ENCODE measurements at regions of chr17 and their contacts with region 1.

Region 1: GRCh38 chr17:2347547-2348307 is 10.4 kb downstream of the SGSM2 start:
- DNase-seq: no peak
- ATAC-seq: no peak
- H3K4me3 ChIP-seq: no peak overlapping the region
- H3K4me3 Mint-ChIP-seq: no peak overlapping the region
- H3K27ac ChIP-seq: no peak overlapping the region
- H3K27ac Mint-ChIP-seq: no peak overlapping the region
- H3K4me1 ChIP-seq: no peaks in the 10 kb centered on the region
- H3K4me1 Mint-ChIP-seq: no peaks in the 10 kb centered on the region
- H3K27me3 ChIP-seq: no peaks in the 10 kb centered on the region
- H3K27me3 Mint-ChIP-seq: no peaks in the 10 kb centered on the region
- CTCF ChIP-seq: no peak

Region 2: GRCh38 chr17:1882836-1883235 is 464.9 kb before region 1 on chr17:
- CTCF ChIA-PET with region 1: no interaction called
- POLR2A ChIA-PET with region 1: no interaction called
- intact Hi-C with region 1: loop called (anchors 5 kb)
- DNase-seq: peak; percentile 55
- ATAC-seq: peak; percentile 53
- H3K4me3 ChIP-seq: no peak overlapping the region
- H3K4me3 Mint-ChIP-seq: no peak overlapping the region
- H3K27ac ChIP-seq: no peak overlapping the region
- H3K27ac Mint-ChIP-seq: no peak overlapping the region
- H3K4me1 ChIP-seq: no peaks in the 10 kb centered on the region
- H3K4me1 Mint-ChIP-seq: no peaks in the 10 kb centered on the region
- H3K27me3 ChIP-seq: no peaks in the 10 kb centered on the region
- H3K27me3 Mint-ChIP-seq: no peaks in the 10 kb centered on the region
- CTCF ChIP-seq: peak; percentile 60

Region 3: GRCh38 chr17:2239882-2240430 is 107.8 kb before region 1 on chr17:
- CTCF ChIA-PET with region 1: no interaction called
- POLR2A ChIA-PET with region 1: no interaction called
- intact Hi-C with region 1: no loop called
- DNase-seq: peak; percentile 68
- ATAC-seq: peak; percentile 81
- H3K4me3 ChIP-seq: peak overlapping the region in 2 of 5 experiments; percentile 4 to 27
- H3K4me3 Mint-ChIP-seq: peak overlapping the region; percentile 83
- H3K27ac ChIP-seq: peak overlapping the region; percentile 65 to 79
- H3K27ac Mint-ChIP-seq: peak overlapping the region; percentile 94
- H3K4me1 ChIP-seq: peaks cover 12 to 25% of the 10 kb centered on the region in 2 donors
- H3K4me1 Mint-ChIP-seq: peaks cover 22% of the 10 kb centered on the region
- H3K27me3 ChIP-seq: no peaks in the 10 kb centered on the region
- H3K27me3 Mint-ChIP-seq: no peaks in the 10 kb centered on the region
- CTCF ChIP-seq: no peak

Region 4: GRCh38 chr17:2303204-2304188 is 44.2 kb before region 1 on chr17 and contains the starts of genes SMG6 and SRR:
- CTCF ChIA-PET with region 1: interaction called, 8 read pairs
- POLR2A ChIA-PET with region 1: no interaction called
- intact Hi-C with region 1: loop called (anchors 5 kb)
- DNase-seq: peak; percentile 96
- ATAC-seq: peak; percentile 89
- H3K4me3 ChIP-seq: peak within 1 kb of the TSS; percentile 78 to 98 (median 95)
- H3K4me3 Mint-ChIP-seq: peak within 1 kb of the TSS; percentile 91
- H3K27ac ChIP-seq: peak within 1 kb of the TSS; percentile 49 to 85
- H3K27ac Mint-ChIP-seq: peak within 1 kb of the TSS; percentile 85
- H3K4me1 ChIP-seq: peaks cover 6 to 19% of the 10 kb centered on the region in 2 donors
- H3K4me1 Mint-ChIP-seq: peaks cover 11% of the 10 kb centered on the region
- H3K27me3 ChIP-seq: no peaks in the 10 kb centered on the region
- H3K27me3 Mint-ChIP-seq: no peaks in the 10 kb centered on the region
- CTCF ChIP-seq: no peak
- total RNA-seq, gene SMG6: 35.5 and 41.8 TPM in 2 replicates
- total RNA-seq, gene SRR: 5.1 and 10.1 TPM in 2 replicates